ENCODE measurements at regions of chr12 and their contacts with region 1.

Region 1: DNA sequence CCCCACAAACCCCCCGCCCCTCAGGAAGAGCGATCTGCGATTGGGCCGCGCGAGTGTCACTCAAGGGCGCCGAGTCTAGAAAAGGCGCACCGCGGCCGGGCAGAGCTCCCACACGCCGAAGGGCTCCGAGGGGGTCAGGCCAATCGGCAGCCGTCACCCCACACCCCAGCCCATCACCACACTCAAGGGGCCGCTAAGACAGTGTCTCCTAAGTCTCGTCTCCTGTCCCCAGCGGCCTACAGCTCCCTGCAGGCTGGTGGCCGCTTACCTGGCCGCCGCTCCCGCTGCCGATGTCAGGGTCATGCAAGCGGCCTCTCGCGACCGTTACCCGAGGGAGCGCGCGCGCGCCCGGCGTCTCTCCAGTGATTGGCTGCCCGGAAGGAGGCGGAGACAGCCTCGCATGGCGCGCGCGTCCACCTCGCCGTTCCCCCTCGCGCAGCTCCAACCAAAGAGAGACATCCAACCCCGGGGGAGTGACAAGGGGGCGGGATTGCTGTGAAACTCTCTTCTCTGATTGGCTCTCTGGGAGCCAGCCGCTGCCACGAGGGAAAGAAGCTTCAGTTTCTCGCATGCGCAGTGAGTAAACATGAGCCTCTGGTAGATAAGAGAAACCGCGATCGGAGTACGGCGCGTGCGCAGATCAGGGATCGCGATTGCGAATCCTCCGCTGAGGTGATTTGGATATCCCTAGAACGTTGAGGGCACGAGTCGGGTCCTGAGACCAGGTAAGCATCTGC is at the starts of genes MPHOSPH9 and MTRFR:
- DNase-seq: peak; percentile 96
- ATAC-seq: peak; percentile 90
- H3K4me3 Mint-ChIP-seq: peak within 1 kb of the TSS; percentile 98
- H3K27ac Mint-ChIP-seq: peak within 1 kb of the TSS; percentile 98
- H3K4me1 Mint-ChIP-seq: peaks cover 73% of the 10 kb centered on the region
- H3K27me3 Mint-ChIP-seq: peaks cover 3% of the 10 kb centered on the region
- CTCF ChIP-seq: no peak
- total RNA-seq, gene MPHOSPH9: 37.3 and 47.2 TPM in 2 replicates
- total RNA-seq, gene MTRFR: 23.5 and 23.6 TPM in 2 replicates

Region 2: GRCh38 chr12:122500685-122501488 is 732.1 kb before region 1 on chr12 and contains the start of gene ZCCHC8:
- CTCF ChIA-PET with region 1: no interaction called
- POLR2A ChIA-PET with region 1: interaction called, 11 read pairs
- intact Hi-C with region 1: no loop called
- DNase-seq: peak; percentile 89
- ATAC-seq: peak; percentile 92
- H3K4me3 Mint-ChIP-seq: peak within 1 kb of the TSS; percentile 97
- H3K27ac Mint-ChIP-seq: peak within 1 kb of the TSS; percentile 97
- H3K4me1 Mint-ChIP-seq: peaks cover 44% of the 10 kb centered on the region
- H3K27me3 Mint-ChIP-seq: no peaks in the 10 kb centered on the region
- CTCF ChIP-seq: no peak
- total RNA-seq, gene ZCCHC8: 39.8 and 48.0 TPM in 2 replicates

Region 3: GRCh38 chr12:122888232-122888867 is 344.6 kb before region 1 on chr12:
- CTCF ChIA-PET with region 1: no interaction called
- POLR2A ChIA-PET with region 1: interaction called, 7 read pairs
- intact Hi-C with region 1: loop called (anchors 5 kb)
- DNase-seq: no peak
- ATAC-seq: peak; percentile 55
- H3K4me3 Mint-ChIP-seq: peak overlapping the region; percentile 88
- H3K27ac Mint-ChIP-seq: peak overlapping the region; percentile 96
- H3K4me1 Mint-ChIP-seq: peaks cover 93% of the 10 kb centered on the region
- H3K27me3 Mint-ChIP-seq: no peaks in the 10 kb centered on the region
- CTCF ChIP-seq: no peak

Region 4: GRCh38 chr12:123075646-123076171 is 157.3 kb before region 1 on chr12:
- CTCF ChIA-PET with region 1: no interaction called
- POLR2A ChIA-PET with region 1: interaction called, 14 read pairs
- intact Hi-C with region 1: no loop called
- DNase-seq: no peak
- ATAC-seq: peak; percentile 88
- H3K4me3 Mint-ChIP-seq: peak overlapping the region; percentile 36
- H3K27ac Mint-ChIP-seq: peak overlapping the region; percentile 76
- H3K4me1 Mint-ChIP-seq: peaks cover 32% of the 10 kb centered on the region
- H3K27me3 Mint-ChIP-seq: no peaks in the 10 kb centered on the region
- CTCF ChIP-seq: no peak

Region 5: DNA sequence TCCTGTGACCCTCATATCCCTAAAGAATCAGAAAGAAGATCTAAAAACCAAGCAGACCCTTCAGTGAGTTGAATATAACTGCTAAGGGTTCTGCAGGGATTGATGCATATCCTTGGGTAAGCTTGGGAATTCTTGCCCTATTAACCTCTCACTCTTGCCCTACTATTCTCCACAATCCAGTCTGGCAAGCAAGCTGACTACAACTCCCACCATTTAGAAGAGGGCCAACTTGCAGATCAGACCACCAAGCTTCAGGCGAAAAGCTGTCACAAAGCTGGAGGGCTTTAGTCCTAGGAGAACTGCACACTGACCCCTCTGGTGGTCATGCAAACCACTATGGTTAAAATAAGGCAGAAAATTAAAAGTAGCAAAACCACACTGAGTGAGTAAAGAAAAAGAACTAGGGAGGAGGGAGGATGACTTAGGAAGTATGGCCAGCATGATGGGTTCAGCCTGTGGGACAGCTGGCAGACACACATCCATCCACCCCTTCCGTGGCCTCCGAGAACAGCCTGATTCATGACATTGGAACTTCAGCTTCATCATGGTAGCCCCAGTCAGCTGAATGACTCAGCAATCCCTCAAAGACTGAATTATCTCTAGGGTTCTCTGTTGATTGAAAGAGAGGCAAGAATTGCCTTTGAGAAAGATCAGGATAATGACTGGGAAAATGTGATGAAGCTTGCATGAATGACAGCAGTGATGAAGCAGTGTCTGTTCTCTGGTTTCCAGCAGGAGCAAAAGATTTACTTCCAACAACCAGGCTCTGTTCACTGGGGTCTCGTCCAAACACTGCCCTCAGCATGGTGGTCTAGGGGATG is 106.6 kb before region 1 on chr12:
- CTCF ChIA-PET with region 1: no interaction called
- POLR2A ChIA-PET with region 1: no interaction called
- intact Hi-C with region 1: no loop called
- DNase-seq: no peak
- ATAC-seq: no peak
- H3K4me3 Mint-ChIP-seq: no peak overlapping the region
- H3K27ac Mint-ChIP-seq: no peak overlapping the region
- H3K4me1 Mint-ChIP-seq: peaks cover 47% of the 10 kb centered on the region
- H3K27me3 Mint-ChIP-seq: peaks cover 3% of the 10 kb centered on the region
- CTCF ChIP-seq: no peak

Region 6: GRCh38 chr12:123250484-123251383 is 17.8 kb after region 1 on chr12:
- CTCF ChIA-PET with region 1: interaction called, 17 read pairs
- POLR2A ChIA-PET with region 1: interaction called, 6 read pairs
- intact Hi-C with region 1: no loop called
- DNase-seq: no peak
- ATAC-seq: no peak
- H3K4me3 Mint-ChIP-seq: no peak overlapping the region
- H3K27ac Mint-ChIP-seq: no peak overlapping the region
- H3K4me1 Mint-ChIP-seq: peaks cover 42% of the 10 kb centered on the region
- H3K27me3 Mint-ChIP-seq: no peaks in the 10 kb centered on the region
- CTCF ChIP-seq: no peak

Region 7: DNA sequence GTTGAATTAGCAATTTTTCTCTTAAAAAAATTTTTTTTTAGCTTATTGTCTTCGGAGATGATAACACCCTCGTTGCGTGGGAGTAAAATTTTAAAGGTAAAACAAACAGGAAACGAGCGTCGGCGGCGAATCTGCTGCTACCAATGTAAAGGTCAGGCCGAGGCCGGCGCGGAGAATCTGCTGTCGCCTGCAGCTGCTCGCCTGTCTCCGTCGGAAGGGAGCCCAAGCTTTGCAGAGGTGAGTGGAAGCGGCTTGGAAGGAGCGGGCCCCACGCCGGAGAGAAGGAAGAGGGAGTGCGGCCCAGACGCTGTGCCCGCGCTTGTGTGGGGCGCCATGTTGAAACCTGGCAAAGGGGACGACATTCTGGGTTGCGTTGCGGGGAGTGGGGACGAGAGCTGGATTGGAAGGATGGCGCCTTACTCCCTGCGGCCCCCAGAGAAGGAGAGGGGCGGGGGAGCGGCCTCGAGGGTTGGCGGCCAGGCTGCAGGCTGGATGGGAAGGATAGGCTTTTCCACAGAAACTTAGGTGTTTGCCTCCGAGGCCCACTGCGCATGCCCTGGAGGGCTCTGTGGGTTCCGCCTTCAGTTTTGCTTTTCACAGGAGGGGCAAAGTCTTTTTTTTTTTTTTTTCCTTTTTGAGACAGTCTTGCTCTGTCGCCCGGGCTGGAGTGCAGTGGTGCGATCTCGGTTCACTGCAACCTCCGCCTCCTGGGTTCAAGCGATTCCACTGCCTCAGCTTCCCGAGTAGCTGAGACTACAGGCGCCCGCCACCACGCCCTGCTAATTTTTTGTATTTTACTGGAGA is 225.2 kb after region 1 on chr12 and contains the start of gene SNRNP35:
- CTCF ChIA-PET with region 1: no interaction called
- POLR2A ChIA-PET with region 1: no interaction called
- intact Hi-C with region 1: loop called (anchors 2 kb)
- DNase-seq: peak; percentile 84
- ATAC-seq: peak; percentile 79
- H3K4me3 Mint-ChIP-seq: peak within 1 kb of the TSS; percentile 100
- H3K27ac Mint-ChIP-seq: peak within 1 kb of the TSS; percentile 100
- H3K4me1 Mint-ChIP-seq: peaks cover 33% of the 10 kb centered on the region
- H3K27me3 Mint-ChIP-seq: no peaks in the 10 kb centered on the region
- CTCF ChIP-seq: no peak
- total RNA-seq, gene SNRNP35: 39.5 and 51.5 TPM in 2 replicates

Region 8: DNA sequence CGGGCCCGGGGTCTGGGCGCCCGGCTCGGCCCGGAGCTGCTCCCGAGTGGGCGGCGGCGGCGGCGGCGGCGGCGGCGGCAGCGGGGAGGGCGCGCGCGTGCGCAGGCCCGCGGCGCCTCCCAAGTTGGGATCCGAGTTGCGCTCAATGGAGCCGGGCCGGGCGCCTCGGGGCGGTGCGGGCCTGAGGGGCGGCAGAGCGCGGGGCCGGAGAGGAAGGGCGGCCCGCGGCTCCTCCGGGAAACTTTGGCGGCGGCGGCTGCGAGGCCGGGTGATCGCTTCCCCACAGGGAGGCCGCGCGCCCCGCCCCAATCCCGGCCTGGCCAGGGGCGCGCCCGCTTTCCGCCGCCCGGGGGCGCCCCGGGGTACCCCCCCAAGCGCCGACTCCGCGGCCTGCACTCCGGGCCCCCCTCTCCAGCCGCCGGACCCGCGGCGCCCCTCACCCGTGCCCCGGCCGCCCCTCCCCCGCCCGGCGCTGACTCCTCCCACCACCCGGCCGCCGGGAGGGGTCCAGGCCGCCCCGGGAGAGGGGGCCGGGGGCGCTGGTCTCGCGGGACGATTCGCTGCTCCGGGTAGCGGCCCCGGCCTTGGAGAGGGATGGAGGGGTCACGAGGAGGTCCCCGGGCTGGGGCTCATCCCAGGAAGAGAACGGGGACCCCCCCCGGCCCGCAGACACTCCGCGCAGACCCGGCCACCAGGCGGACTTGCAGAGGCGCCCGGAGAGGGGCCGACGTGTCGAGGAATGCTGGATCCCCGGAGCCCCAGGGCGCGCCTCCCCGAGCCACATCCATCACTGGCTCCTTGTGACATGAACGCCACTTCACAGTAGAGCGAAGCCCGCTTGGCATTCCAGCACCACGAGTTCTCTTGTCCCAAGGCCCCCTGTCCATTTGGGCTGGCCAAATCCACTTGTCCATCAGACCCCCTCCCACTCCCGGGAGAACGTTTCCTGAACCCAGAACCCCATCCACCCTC is 301.0 kb after region 1 on chr12 and contains the start of gene RILPL1:
- CTCF ChIA-PET with region 1: no interaction called
- POLR2A ChIA-PET with region 1: no interaction called
- intact Hi-C with region 1: no loop called
- DNase-seq: peak; percentile 66
- ATAC-seq: peak; percentile 72
- H3K4me3 Mint-ChIP-seq: peak within 1 kb of the TSS; percentile 85
- H3K27ac Mint-ChIP-seq: no peak within 1 kb of the TSS
- H3K4me1 Mint-ChIP-seq: peaks cover 20% of the 10 kb centered on the region
- H3K27me3 Mint-ChIP-seq: no peaks in the 10 kb centered on the region
- CTCF ChIP-seq: no peak
- total RNA-seq, gene RILPL1: 0.67 and 0.69 TPM in 2 replicates